Vagina (tissue), 2 donors: ENCODE measurements at regions of chr10 and their contacts with region 1.

Region 1: GRCh38 chr10:102484021-102484420 is 18.5 kb downstream of the ACTR1A start:
- DNase-seq: no peak
- H3K4me3 ChIP-seq: no peak overlapping the region
- H3K27ac ChIP-seq: no peak overlapping the region
- H3K4me1 ChIP-seq: no peaks in the 10 kb centered on the region
- H3K27me3 ChIP-seq: no peaks in the 10 kb centered on the region
- CTCF ChIP-seq: no peak
- POLR2A ChIP-seq: no peak

Region 2: GRCh38 chr10:102399217-102400089 is 84.6 kb before region 1 on chr10:
- intact Hi-C with region 1: loop called (anchors 5 kb)
- DNase-seq: no peak
- H3K4me3 ChIP-seq: peak overlapping the region; percentile 61 to 65
- H3K27ac ChIP-seq: peak overlapping the region; percentile 95
- H3K4me1 ChIP-seq: peaks cover 45% of the 10 kb centered on the region
- H3K27me3 ChIP-seq: no peaks in the 10 kb centered on the region
- CTCF ChIP-seq: peak; percentile 80 to 94 (median 94)
- POLR2A ChIP-seq: no peak

Region 3: GRCh38 chr10:102565793-102566192 is 81.8 kb after region 1 on chr10:
- intact Hi-C with region 1: no loop called
- DNase-seq: no peak
- H3K4me3 ChIP-seq: no peak overlapping the region
- H3K27ac ChIP-seq: no peak overlapping the region
- H3K4me1 ChIP-seq: no peaks in the 10 kb centered on the region
- H3K27me3 ChIP-seq: no peaks in the 10 kb centered on the region
- CTCF ChIP-seq: no peak
- POLR2A ChIP-seq: no peak